SK-N-SH (cell line): ENCODE measurements at regions of chrX and their contacts with region 1.

Region 1: GRCh38 chrX:69503782-69504625 is at the start of gene NALF2:
- DNase-seq: peak; percentile 86
- H3K4me3 ChIP-seq: peak within 1 kb of the TSS; percentile 35 to 44; a peak in 3 of 4 replicates
- H3K27ac ChIP-seq: peak within 1 kb of the TSS in 1 of 2 experiments; percentile 47; a peak in 1 of 4 replicates
- H3K4me1 ChIP-seq: no peaks in the 10 kb centered on the region; a peak in 1 of 4 replicates
- H3K27me3 ChIP-seq: peaks cover 14% of the 10 kb centered on the region
- CTCF ChIP-seq: no peak
- EP300 ChIP-seq: no peak
- RAD21 ChIP-seq: no peak
- polyA plus RNA-seq, gene NALF2: 0.02 and 0.06 TPM in 2 replicates

Region 2: DNA sequence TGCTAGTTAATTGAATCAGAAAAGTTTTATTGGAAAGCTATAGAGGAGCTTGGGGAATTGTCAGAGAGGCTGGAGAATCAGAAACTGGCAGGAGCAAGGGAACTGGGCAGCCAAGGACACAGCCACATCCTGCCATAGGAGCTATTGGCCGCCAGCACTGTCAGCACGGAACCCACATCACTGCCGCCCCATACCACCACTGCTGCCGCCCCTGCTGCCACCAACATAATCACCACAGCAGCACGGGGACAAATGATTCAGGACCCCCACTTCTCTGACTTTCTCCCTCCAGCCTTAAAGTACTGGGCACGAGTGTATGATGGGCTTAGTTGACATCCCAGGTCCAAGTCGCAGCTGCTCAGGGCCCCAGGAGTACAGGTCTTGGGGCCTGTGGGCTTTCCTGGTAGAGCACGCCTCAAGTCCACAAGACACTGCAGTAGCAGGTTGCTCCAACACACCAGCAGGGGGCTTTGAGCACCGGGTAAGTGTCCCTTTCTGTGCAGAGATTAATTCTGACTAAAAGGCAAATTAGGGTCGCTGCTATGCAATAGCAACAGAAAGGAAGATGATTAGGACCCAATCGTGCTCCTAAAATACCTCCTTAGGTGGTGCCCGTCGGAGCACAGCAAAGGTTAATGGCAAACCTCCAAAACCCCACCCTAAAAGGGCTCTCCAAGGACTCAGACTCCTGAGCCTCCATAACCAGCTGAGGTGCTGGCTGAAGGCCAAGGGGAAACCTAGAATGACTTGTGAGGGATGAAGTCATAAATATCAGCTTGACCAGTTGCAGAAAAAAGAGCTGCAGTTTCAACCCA is 345.6 kb before region 1 on chrX:
- CTCF ChIA-PET with region 1: no interaction called
- POLR2A ChIA-PET with region 1: no interaction called
- DNase-seq: peak; percentile 65
- H3K4me3 ChIP-seq: no peak overlapping the region
- H3K27ac ChIP-seq: no peak overlapping the region
- H3K4me1 ChIP-seq: peaks cover 0 to 2% of the 10 kb centered on the region in 2 experiments; a peak in 1 of 4 replicates
- H3K27me3 ChIP-seq: peaks cover 7% of the 10 kb centered on the region; the same call in 1 of the 2 replicates
- CTCF ChIP-seq: peak; percentile 66
- EP300 ChIP-seq: no peak
- RAD21 ChIP-seq: peak; percentile 57

Region 3: GRCh38 chrX:69493193-69493592 is 10.8 kb before region 1 on chrX:
- CTCF ChIA-PET with region 1: interaction called, 17 read pairs
- POLR2A ChIA-PET with region 1: no interaction called
- DNase-seq: peak; percentile 45
- H3K4me3 ChIP-seq: peak overlapping the region in 1 of 2 experiments; percentile 31; a peak in 1 of 4 replicates
- H3K27ac ChIP-seq: no peak overlapping the region
- H3K4me1 ChIP-seq: no peaks in the 10 kb centered on the region
- H3K27me3 ChIP-seq: no peaks in the 10 kb centered on the region; the same call in 1 of the 2 replicates
- CTCF ChIP-seq: peak; percentile 62
- EP300 ChIP-seq: no peak
- RAD21 ChIP-seq: peak; percentile 75

Region 4: GRCh38 chrX:69615779-69616456 is 111.9 kb after region 1 on chrX and contains the start of gene EDA:
- CTCF ChIA-PET with region 1: interaction called, 14 read pairs
- POLR2A ChIA-PET with region 1: no interaction called
- DNase-seq: peak; percentile 88
- H3K4me3 ChIP-seq: peak within 1 kb of the TSS; percentile 38 to 49
- H3K27ac ChIP-seq: no peak within 1 kb of the TSS
- H3K4me1 ChIP-seq: no peaks in the 10 kb centered on the region; a peak in 1 of 4 replicates
- H3K27me3 ChIP-seq: peaks cover 40% of the 10 kb centered on the region
- CTCF ChIP-seq: no peak
- EP300 ChIP-seq: no peak
- RAD21 ChIP-seq: no peak
- polyA plus RNA-seq, gene EDA: 0.02 and 0.06 TPM in 2 replicates

Region 5: GRCh38 chrX:70133303-70134115 is 629.5 kb after region 1 on chrX and contains the start of gene IGBP1:
- CTCF ChIA-PET with region 1: interaction called, 10 read pairs
- POLR2A ChIA-PET with region 1: no interaction called
- DNase-seq: peak; percentile 86
- H3K4me3 ChIP-seq: peak within 1 kb of the TSS; percentile 68 to 75
- H3K27ac ChIP-seq: peak within 1 kb of the TSS; percentile 90 to 97
- H3K4me1 ChIP-seq: peaks cover 0 to 9% of the 10 kb centered on the region in 2 experiments; a peak in 1 of 4 replicates
- H3K27me3 ChIP-seq: no peaks in the 10 kb centered on the region
- CTCF ChIP-seq: peak; percentile 67
- EP300 ChIP-seq: no peak
- RAD21 ChIP-seq: no peak
- polyA plus RNA-seq, gene IGBP1: 49.4 and 59.9 TPM in 2 replicates